Pancreas (tissue), 10 donors: ENCODE measurements at regions of chr1 and their contacts with region 1.

Region 1: DNA sequence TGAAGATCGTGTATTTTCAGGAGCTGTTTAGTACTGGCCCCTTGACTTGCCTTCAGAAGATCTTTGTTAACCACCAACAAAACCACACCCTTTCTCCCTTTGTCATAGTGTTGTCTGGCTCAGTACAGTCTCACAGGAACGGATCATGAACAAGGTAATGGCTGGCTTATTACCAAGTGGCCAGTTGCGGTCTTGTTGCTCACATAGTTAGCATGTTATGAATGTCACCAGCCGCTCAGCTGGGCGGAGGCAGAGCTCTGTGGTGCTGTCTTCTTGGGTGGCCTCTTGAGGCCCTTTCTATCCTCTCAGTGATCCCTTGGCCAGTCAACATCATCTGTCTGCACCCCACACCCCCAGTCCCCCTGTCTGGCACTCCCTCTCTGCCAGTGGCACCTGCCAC is 21.4 kb downstream of the CNIH3 start:
- DNase-seq: peak in 1 of 6 donors; percentile 44
- ATAC-seq: peak in 1 of 4 donors; percentile 18
- H3K4me3 ChIP-seq: no peak overlapping the region
- H3K27ac ChIP-seq: no peak overlapping the region
- H3K4me1 ChIP-seq: peaks cover 0 to 15% (median 10%) of the 10 kb centered on the region in 3 donors
- H3K27me3 ChIP-seq: no peaks in the 10 kb centered on the region
- CTCF ChIP-seq: no peak

Region 2: GRCh38 chr1:224528900-224529299 is 108.6 kb before region 1 on chr1:
- intact Hi-C with region 1: loop called in 1 of 3 experiments (anchors 10 kb)
- DNase-seq: peak in 2 of 6 donors; percentile 44 to 52
- ATAC-seq: peak; percentile 60 to 73 (median 66)
- H3K4me3 ChIP-seq: no peak overlapping the region
- H3K27ac ChIP-seq: no peak overlapping the region
- H3K4me1 ChIP-seq: peaks cover 0 to 4% (median 0%) of the 10 kb centered on the region in 3 donors
- H3K27me3 ChIP-seq: no peaks in the 10 kb centered on the region
- CTCF ChIP-seq: no peak

Region 3: DNA sequence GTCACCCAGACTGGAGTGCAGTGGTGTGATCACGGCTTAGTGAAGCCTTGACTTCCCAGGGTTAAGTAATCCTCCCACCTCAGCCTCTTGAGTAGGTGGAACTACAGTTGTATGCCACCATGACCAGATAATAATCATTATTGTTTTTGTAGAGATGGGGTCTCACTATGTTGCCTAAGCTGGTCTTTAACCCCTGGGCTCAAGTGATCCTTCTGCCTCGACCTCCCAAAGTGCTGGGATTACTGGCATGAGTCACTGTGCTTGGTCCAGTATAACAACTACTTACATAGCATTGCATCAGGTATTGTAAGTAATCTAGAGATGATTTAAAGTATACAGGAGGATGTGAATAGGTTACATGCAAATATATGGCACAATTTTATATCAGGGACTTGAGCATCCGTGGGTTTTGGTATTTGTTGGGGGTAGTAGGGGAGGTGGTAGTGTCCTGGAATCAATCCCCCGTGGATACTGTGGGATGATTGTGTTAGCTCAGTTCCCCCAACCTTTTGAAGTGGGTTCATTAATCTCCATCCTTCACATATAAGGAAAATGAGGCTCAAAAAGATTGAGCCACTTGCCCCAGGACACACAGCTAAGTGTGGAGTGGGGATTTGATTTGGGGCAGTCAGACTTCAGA is 82.8 kb before region 1 on chr1:
- intact Hi-C with region 1: no loop called
- DNase-seq: no peak
- ATAC-seq: no peak
- H3K4me3 ChIP-seq: no peak overlapping the region
- H3K27ac ChIP-seq: no peak overlapping the region
- H3K4me1 ChIP-seq: no peaks in the 10 kb centered on the region
- H3K27me3 ChIP-seq: no peaks in the 10 kb centered on the region
- CTCF ChIP-seq: no peak

Region 4: GRCh38 chr1:224747578-224747977 is 110.1 kb after region 1 on chr1:
- intact Hi-C with region 1: no loop called
- DNase-seq: no peak
- ATAC-seq: no peak
- H3K4me3 ChIP-seq: no peak overlapping the region
- H3K27ac ChIP-seq: no peak overlapping the region
- H3K4me1 ChIP-seq: no peaks in the 10 kb centered on the region
- H3K27me3 ChIP-seq: no peaks in the 10 kb centered on the region
- CTCF ChIP-seq: no peak